ENCODE measurements at regions of chr1 and their contacts with region 1.

Region 1: DNA sequence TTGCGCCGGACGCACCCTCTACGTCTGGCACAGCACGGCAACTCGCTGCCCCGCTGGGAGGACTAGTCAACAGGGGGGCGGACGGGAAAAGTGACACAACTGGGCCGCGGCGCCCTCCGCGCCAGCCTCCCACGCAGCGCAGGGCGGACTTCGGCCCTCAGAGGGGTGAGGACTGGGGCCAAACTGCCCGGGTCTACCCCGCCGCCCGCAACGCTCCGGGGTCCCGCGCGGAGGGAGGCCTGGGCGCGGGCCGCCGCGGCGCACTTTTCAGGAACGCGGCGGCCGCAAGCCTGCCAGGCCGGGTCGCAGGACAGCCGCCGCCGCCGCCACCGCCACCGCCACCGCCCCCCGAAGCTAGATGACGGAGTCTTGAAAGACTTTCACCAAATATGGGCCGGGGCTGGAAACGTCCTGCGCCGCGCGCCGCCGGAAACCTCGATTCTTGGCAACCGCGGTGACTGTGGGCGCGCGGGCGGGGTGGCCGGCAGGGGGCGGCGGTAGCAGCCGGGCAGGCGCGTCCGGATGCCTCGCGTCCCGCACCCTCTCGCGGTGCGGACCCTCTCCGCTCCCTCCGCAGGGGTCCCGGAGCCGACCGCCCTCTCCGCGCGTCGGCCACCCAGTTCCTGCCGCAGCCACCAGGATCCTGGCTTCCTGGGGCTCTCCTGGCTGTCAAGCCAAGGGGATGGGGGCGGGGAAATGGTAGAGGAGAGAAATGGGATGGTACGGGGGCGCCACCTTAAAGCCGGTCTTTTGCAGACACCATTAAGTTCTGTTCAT is 3.7 kb upstream of the CCN1 start:
- DNase-seq: peak; percentile 87
- H3K4me3 ChIP-seq: peak overlapping the region; percentile 67 to 93 (median 80)
- H3K27ac ChIP-seq: peak overlapping the region; percentile 98
- H3K4me1 ChIP-seq: peaks cover 55% of the 10 kb centered on the region
- H3K27me3 ChIP-seq: no peaks in the 10 kb centered on the region
- CTCF ChIP-seq: peak; percentile 69 to 83
- POLR2A ChIP-seq: peak; percentile 17

Region 2: GRCh38 chr1:85276215-85276977 is 300.4 kb before region 1 on chr1 and contains the start of gene BCL10:
- CTCF ChIA-PET with region 1: interaction called, 3 read pairs
- POLR2A ChIA-PET with region 1: interaction called, 14 read pairs
- dilution Hi-C with region 1: no loop called
- intact Hi-C with region 1: loop called (anchors 1 kb)
- DNase-seq: peak; percentile 99
- H3K4me3 ChIP-seq: peak within 1 kb of the TSS; percentile 95 to 99 (median 98)
- H3K27ac ChIP-seq: peak within 1 kb of the TSS; percentile 100
- H3K4me1 ChIP-seq: peaks cover 56% of the 10 kb centered on the region
- H3K27me3 ChIP-seq: no peaks in the 10 kb centered on the region
- CTCF ChIP-seq: no peak
- POLR2A ChIP-seq: peak; percentile 64
- total RNA-seq, gene BCL10: 74.5 and 78.6 TPM in 2 replicates

Region 3: DNA sequence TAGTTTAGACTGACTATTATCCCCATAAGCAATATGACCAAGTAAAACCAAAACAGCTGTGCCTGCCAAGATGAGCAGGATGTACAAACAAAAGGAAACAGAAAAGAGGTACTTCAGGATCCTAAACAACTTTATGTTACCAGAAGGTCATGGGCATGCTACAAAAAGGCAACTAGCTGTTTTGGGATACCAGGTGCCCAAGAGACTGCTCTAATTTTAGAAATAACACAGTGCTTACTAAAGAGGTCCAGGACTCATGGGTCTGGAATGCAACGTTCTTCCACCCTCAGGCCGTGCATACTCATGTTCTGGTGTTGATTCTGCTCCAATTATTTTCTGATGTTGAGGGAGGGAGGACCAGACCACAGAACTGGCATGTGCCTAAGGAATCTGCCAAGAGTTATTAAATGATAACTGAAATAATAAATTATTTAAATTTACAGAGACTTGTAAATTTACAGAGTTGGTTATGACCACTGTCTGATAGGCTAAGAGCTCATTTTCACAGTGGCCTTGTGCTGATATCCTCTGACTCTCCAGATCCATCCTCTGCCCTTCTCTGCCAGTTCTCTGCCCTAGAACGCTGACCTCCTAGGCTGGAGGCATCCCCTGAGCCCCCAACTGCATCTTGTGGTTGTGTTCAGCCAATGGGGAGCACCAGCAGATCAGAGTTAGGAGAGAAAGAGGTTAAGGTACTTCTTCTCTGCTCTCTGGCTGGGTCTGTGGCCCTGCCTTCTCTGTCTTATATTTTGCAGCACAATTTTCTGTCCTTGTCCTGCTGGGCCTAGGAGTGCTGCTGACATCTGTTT is 262.7 kb before region 1 on chr1:
- CTCF ChIA-PET with region 1: interaction called, 37 read pairs
- POLR2A ChIA-PET with region 1: interaction called, 10 read pairs
- dilution Hi-C with region 1: no loop called
- intact Hi-C with region 1: loop called (anchors 1 kb)
- DNase-seq: peak; percentile 87
- H3K4me3 ChIP-seq: no peak overlapping the region
- H3K27ac ChIP-seq: peak overlapping the region; percentile 93
- H3K4me1 ChIP-seq: peaks cover 63% of the 10 kb centered on the region
- H3K27me3 ChIP-seq: no peaks in the 10 kb centered on the region
- CTCF ChIP-seq: no peak
- POLR2A ChIP-seq: peak; percentile 59

Region 4: DNA sequence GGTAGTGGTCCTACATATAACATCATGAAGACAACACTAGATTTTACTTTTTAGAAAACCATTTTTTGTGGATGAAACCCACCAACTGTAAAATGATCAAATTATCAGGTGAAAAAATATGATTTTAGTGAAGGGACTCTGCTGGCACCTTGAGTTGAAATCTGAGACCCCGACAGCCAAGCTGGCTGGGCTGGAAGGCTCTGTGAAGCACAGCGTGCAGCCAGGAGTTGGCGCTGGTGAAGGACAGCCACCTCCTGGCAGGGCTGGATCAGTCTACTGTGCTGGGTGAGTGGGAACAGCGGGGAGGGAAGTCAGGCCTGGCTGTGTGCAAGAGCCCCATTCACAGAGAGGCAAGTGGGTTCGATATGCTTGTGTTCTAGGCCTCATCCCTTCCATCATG is 159.8 kb before region 1 on chr1:
- CTCF ChIA-PET with region 1: no interaction called
- POLR2A ChIA-PET with region 1: no interaction called
- dilution Hi-C with region 1: no loop called
- intact Hi-C with region 1: loop called (anchors 2 kb)
- DNase-seq: peak; percentile 74
- H3K4me3 ChIP-seq: no peak overlapping the region
- H3K27ac ChIP-seq: peak overlapping the region; percentile 61
- H3K4me1 ChIP-seq: peaks cover 30% of the 10 kb centered on the region
- H3K27me3 ChIP-seq: no peaks in the 10 kb centered on the region
- CTCF ChIP-seq: peak in 1 of 2 donors; percentile 47
- POLR2A ChIP-seq: no peak

Region 5: GRCh38 chr1:85448358-85448757 is 128.5 kb before region 1 on chr1:
- CTCF ChIA-PET with region 1: interaction called, 3 read pairs
- POLR2A ChIA-PET with region 1: no interaction called
- dilution Hi-C with region 1: no loop called
- intact Hi-C with region 1: loop called (anchors 1 kb)
- DNase-seq: peak; percentile 91
- H3K4me3 ChIP-seq: no peak overlapping the region
- H3K27ac ChIP-seq: peak overlapping the region; percentile 98
- H3K4me1 ChIP-seq: peaks cover 34% of the 10 kb centered on the region
- H3K27me3 ChIP-seq: no peaks in the 10 kb centered on the region
- CTCF ChIP-seq: no peak
- POLR2A ChIP-seq: no peak

Measured in endothelial cell of umbilical vein (primary cell).